ENCODE measurements at regions of chr11 and their contacts with region 1.

Region 1: GRCh38 chr11:33987975-33988580 is 63.5 kb upstream of the CAPRIN1 start:
- DNase-seq: peak; percentile 65
- H3K4me3 Mint-ChIP-seq: no peak overlapping the region
- H3K27ac Mint-ChIP-seq: no peak overlapping the region
- H3K4me1 Mint-ChIP-seq: peaks cover 5% of the 10 kb centered on the region
- H3K27me3 Mint-ChIP-seq: peaks cover 5% of the 10 kb centered on the region

Region 2: GRCh38 chr11:33808228-33808828 is 179.8 kb before region 1 on chr11:
- CTCF ChIA-PET with region 1: interaction called, 10 read pairs
- POLR2A ChIA-PET with region 1: no interaction called
- DNase-seq: peak; percentile 82
- H3K4me3 Mint-ChIP-seq: no peak overlapping the region
- H3K27ac Mint-ChIP-seq: no peak overlapping the region
- H3K4me1 Mint-ChIP-seq: peaks cover 3% of the 10 kb centered on the region
- H3K27me3 Mint-ChIP-seq: peaks cover 33% of the 10 kb centered on the region

Region 3: GRCh38 chr11:33857933-33858371 is 130.1 kb before region 1 on chr11:
- CTCF ChIA-PET with region 1: interaction called, 26 read pairs
- POLR2A ChIA-PET with region 1: no interaction called
- DNase-seq: peak; percentile 71
- H3K4me3 Mint-ChIP-seq: no peak overlapping the region
- H3K27ac Mint-ChIP-seq: no peak overlapping the region
- H3K4me1 Mint-ChIP-seq: no peaks in the 10 kb centered on the region
- H3K27me3 Mint-ChIP-seq: peaks cover 62% of the 10 kb centered on the region

Region 4: GRCh38 chr11:33949252-33949913 is 38.7 kb before region 1 on chr11:
- CTCF ChIA-PET with region 1: no interaction called
- POLR2A ChIA-PET with region 1: no interaction called
- DNase-seq: no peak
- H3K4me3 Mint-ChIP-seq: no peak overlapping the region
- H3K27ac Mint-ChIP-seq: no peak overlapping the region
- H3K4me1 Mint-ChIP-seq: no peaks in the 10 kb centered on the region
- H3K27me3 Mint-ChIP-seq: peaks cover 7% of the 10 kb centered on the region

Region 5: DNA sequence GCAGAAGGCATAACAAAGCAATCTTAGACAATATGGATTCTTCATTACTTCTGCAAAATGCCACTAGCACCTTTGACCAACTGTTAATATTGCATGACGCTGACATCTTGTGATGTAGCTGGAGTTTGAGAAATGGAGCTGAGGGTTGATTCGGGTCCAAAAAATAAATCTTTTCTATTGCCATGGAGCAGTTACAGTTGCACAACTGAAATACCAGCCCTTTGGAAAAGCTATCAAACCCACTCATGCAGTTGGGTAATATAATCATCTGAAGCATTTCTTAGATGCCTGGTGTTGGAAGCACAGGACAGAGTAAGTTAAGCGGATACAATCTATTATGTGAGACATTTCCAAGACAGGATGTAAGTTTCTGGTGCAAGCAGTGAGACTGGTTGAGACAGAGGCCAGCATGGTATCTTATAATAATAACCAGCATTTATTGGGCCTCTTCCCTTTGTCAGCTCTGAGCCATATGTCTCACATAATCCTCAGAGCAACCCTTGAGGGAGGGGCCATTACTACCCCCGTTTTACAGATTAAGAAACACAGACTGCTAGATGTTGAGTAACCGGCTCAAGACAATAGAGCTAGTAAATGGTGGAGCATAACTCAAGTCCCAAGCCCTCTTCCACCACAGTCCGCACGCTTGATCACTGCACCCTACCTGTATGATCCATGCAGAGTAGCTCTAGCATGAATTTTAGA is 11.4 kb before region 1 on chr11:
- CTCF ChIA-PET with region 1: interaction called, 13 read pairs
- POLR2A ChIA-PET with region 1: no interaction called
- DNase-seq: no peak
- H3K4me3 Mint-ChIP-seq: no peak overlapping the region
- H3K27ac Mint-ChIP-seq: no peak overlapping the region
- H3K4me1 Mint-ChIP-seq: no peaks in the 10 kb centered on the region
- H3K27me3 Mint-ChIP-seq: peaks cover 27% of the 10 kb centered on the region

Region 6: GRCh38 chr11:34002268-34002807 is 14.3 kb after region 1 on chr11:
- CTCF ChIA-PET with region 1: interaction called, 14 read pairs
- POLR2A ChIA-PET with region 1: interaction called, 4 read pairs
- DNase-seq: no peak
- H3K4me3 Mint-ChIP-seq: no peak overlapping the region
- H3K27ac Mint-ChIP-seq: no peak overlapping the region
- H3K4me1 Mint-ChIP-seq: peaks cover 5% of the 10 kb centered on the region
- H3K27me3 Mint-ChIP-seq: peaks cover 48% of the 10 kb centered on the region

Measured in activated CD4-positive, alpha-beta memory T cell treated with anti-CD3 and anti-CD28 coated beads, Interleukin-2, amount 10 ng/mL, durations not matched to agents 7 days and 5 days (primary cell).